HCT116 (cell line): ENCODE measurements at regions of chr11 and their contacts with region 1.

Region 1: DNA sequence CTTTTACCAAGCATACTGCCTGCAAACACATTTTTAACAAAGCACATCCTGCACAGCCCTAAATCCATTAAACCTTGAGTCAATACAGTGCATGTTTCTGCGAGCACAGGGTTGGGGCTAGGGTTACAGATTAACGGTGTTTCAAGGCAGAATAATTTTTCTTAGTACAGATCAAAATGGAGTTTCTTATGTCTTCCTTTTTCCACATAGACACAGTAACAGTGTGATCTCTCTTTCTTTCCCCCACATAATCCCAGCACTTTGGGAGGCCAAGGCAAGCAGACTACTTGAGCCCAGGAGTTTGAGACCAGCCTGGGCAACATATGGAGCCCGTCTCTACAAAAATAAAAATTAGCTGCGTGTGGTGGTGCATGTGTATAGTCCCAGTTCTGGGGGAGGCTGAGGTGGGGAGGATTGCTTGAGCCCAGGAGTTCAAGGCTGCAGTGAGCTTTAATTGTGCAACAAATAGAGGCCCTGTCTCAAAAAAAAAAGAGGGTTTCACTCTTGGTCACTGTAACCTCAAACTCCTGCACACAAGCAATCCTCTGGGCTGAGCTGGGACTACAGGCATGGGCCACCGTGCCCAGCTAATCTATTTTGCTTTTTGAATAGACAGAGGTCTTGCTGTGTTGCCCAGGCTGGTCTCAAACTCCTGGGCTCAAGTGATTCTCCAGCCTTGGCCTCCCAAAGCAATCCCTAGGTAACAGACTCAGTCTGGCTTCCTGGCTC is 19.7 kb upstream of the SLC3A2 start:
- DNase-seq: no peak
- ATAC-seq: no peak
- H3K4me3 ChIP-seq: no peak overlapping the region
- H3K27ac ChIP-seq: peak overlapping the region; percentile 44; the same call in 1 of the 2 replicates
- H3K4me1 ChIP-seq: peaks cover 25 to 38% of the 10 kb centered on the region in 2 experiments
- H3K27me3 ChIP-seq: no peaks in the 10 kb centered on the region
- CTCF ChIP-seq: no peak
- POLR2A ChIP-seq: no peak
- RAD21 ChIP-seq: no peak

Region 2: DNA sequence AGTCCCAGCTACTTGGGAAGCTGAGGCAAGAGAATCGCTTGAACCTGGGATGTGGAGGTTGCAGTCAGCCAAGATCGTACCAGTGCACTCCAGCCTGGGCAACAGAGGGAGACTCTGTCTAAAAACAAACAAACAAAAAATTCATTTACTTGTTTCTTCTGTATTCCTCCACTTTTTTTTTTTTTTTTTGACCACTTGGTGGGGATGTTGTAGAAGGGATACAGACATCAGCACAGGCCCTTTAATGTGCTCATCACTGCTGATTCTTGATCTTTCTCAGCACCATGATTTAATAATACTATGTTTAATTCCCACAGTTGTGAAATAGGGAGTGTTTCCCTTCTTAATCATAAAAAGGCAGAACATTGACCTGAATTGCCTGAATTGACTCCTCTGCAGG is 128.2 kb before region 1 on chr11:
- CTCF ChIA-PET with region 1: interaction called, 5 read pairs
- POLR2A ChIA-PET with region 1: interaction called, 5 read pairs
- RAD21 ChIA-PET with region 1: no interaction called
- intact Hi-C with region 1: loop called (anchors 2 kb)
- DNase-seq: no peak
- ATAC-seq: no peak
- H3K4me3 ChIP-seq: no peak overlapping the region
- H3K27ac ChIP-seq: no peak overlapping the region
- H3K4me1 ChIP-seq: peaks cover 6 to 10% of the 10 kb centered on the region in 2 experiments; a peak in 3 of 4 replicates
- H3K27me3 ChIP-seq: no peaks in the 10 kb centered on the region
- CTCF ChIP-seq: peak; percentile 21 to 59 (median 33); a peak in 4 of 6 replicates
- POLR2A ChIP-seq: no peak
- RAD21 ChIP-seq: peak; percentile 65

Region 3: GRCh38 chr11:62831520-62832335 is 29.3 kb before region 1 on chr11 and contains the start of gene STX5:
- CTCF ChIA-PET with region 1: interaction called, 4 read pairs
- POLR2A ChIA-PET with region 1: interaction called, 14 read pairs
- RAD21 ChIA-PET with region 1: no interaction called
- intact Hi-C with region 1: no loop called
- DNase-seq: peak; percentile 97
- ATAC-seq: peak; percentile 89
- H3K4me3 ChIP-seq: peak within 1 kb of the TSS; percentile 86 to 93
- H3K27ac ChIP-seq: peak within 1 kb of the TSS; percentile 64
- H3K4me1 ChIP-seq: peaks cover 7 to 30% of the 10 kb centered on the region in 2 experiments
- H3K27me3 ChIP-seq: no peaks in the 10 kb centered on the region
- CTCF ChIP-seq: no peak
- POLR2A ChIP-seq: peak; percentile 18
- RAD21 ChIP-seq: no peak
- total RNA-seq, gene STX5: 29.5 TPM

Region 4: GRCh38 chr11:63243533-63243932 is 382.5 kb after region 1 on chr11 and contains the start of gene SLC22A25:
- CTCF ChIA-PET with region 1: no interaction called
- POLR2A ChIA-PET with region 1: no interaction called
- RAD21 ChIA-PET with region 1: no interaction called
- intact Hi-C with region 1: no loop called
- DNase-seq: no peak
- ATAC-seq: no peak
- H3K4me3 ChIP-seq: no peak within 1 kb of the TSS
- H3K27ac ChIP-seq: no peak within 1 kb of the TSS
- H3K4me1 ChIP-seq: no peaks in the 10 kb centered on the region
- H3K27me3 ChIP-seq: peaks cover 38% of the 10 kb centered on the region
- CTCF ChIP-seq: no peak
- POLR2A ChIP-seq: no peak
- RAD21 ChIP-seq: no peak
- total RNA-seq, gene SLC22A25: not detected